ENCODE measurements at regions of chr6 and their contacts with region 1.

Region 1: DNA sequence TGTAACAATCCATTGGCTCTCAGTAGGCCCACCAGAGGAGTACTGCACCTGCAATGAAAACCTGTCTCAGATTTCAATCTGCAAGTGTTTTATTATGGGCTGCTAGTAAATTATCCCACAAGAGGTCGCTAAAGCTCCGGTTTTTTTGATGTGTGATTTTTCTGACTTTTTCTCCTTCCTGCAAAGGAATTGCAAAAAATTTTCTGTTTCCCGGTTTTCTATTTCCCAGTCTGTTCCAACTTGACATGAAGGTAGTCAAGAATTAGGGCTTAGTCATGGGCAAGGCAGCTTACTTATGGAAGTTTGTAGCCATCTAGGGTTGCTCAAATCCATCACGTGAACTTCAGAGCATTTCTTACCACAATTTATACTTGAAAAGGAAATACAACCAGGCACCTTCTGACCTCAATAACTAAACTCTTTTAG is 38.5 kb upstream of the AHI1 start:
- DNase-seq: peak; percentile 15
- H3K4me3 Mint-ChIP-seq: peak overlapping the region; percentile 55
- H3K27ac Mint-ChIP-seq: peak overlapping the region; percentile 77
- H3K4me1 Mint-ChIP-seq: peaks cover 53% of the 10 kb centered on the region
- H3K27me3 Mint-ChIP-seq: no peaks in the 10 kb centered on the region

Region 2: GRCh38 chr6:135506270-135506997 is 29.6 kb before region 1 on chr6:
- intact Hi-C with region 1: loop called (anchors 1 kb)
- DNase-seq: no peak
- H3K4me3 Mint-ChIP-seq: no peak overlapping the region
- H3K27ac Mint-ChIP-seq: no peak overlapping the region
- H3K4me1 Mint-ChIP-seq: peaks cover 11% of the 10 kb centered on the region
- H3K27me3 Mint-ChIP-seq: no peaks in the 10 kb centered on the region

Region 3: DNA sequence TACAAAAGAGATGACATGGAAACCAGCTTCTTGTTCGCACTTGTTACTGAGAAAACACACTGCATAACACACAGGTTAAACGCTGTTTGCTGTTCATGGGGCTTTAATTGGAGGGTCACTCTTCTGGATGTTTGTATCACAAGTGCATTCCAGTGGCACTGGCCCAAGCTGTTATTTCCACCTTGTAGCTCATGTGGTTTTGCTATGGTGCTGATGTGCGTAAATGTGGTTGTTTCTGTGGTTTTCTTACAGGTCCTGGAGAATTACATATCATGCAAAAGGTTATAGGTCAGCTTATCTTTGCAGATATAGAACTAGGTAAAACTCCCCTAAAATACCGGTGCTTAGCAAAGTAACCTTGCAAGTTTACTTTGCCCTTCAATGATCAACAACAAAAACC is 50.8 kb after region 1 on chr6:
- intact Hi-C with region 1: loop called (anchors 1 kb)
- DNase-seq: peak; percentile 38
- H3K4me3 Mint-ChIP-seq: peak overlapping the region; percentile 27
- H3K27ac Mint-ChIP-seq: peak overlapping the region; percentile 88
- H3K4me1 Mint-ChIP-seq: peaks cover 74% of the 10 kb centered on the region
- H3K27me3 Mint-ChIP-seq: no peaks in the 10 kb centered on the region

Region 4: DNA sequence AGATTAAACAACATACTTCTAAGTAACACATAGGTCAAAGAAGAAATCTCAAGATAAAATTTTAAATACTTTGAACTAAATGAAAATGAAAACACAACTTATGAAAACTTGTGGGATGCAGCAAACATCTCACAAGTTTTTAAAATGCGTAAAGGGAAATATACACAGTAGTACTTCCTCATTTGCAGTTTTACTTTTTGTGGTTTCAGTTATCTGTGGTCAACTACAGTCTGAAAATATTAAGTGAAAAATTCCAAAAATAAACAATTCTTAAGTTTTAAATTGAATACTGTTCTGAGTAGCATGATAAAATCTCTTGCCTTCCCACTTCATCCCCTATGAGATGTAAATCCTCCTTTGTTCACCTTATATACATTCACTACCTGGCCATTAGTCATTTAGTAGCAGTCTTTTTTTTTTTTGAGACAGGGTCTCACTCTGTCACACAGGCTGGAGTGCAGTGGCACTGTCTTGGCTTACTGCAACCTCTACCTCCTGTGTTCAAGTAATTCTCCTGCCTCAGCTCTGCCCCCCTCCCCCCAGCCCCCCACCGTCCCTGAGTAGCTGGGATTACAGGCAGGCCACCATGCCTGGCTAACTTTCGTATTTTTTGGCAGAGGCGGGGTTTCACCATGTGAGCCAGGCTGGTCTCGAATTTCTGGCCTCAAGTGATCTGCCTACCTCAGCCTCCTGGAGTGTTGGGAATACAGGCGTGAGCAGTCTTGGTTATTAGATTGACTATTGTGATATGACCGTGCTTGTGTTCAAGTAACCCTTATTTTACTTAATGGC is 116.2 kb after region 1 on chr6:
- intact Hi-C with region 1: loop called (anchors 1 kb)
- DNase-seq: no peak
- H3K4me3 Mint-ChIP-seq: peak overlapping the region; percentile 57
- H3K27ac Mint-ChIP-seq: peak overlapping the region; percentile 91
- H3K4me1 Mint-ChIP-seq: peaks cover 44% of the 10 kb centered on the region
- H3K27me3 Mint-ChIP-seq: no peaks in the 10 kb centered on the region

Region 5: DNA sequence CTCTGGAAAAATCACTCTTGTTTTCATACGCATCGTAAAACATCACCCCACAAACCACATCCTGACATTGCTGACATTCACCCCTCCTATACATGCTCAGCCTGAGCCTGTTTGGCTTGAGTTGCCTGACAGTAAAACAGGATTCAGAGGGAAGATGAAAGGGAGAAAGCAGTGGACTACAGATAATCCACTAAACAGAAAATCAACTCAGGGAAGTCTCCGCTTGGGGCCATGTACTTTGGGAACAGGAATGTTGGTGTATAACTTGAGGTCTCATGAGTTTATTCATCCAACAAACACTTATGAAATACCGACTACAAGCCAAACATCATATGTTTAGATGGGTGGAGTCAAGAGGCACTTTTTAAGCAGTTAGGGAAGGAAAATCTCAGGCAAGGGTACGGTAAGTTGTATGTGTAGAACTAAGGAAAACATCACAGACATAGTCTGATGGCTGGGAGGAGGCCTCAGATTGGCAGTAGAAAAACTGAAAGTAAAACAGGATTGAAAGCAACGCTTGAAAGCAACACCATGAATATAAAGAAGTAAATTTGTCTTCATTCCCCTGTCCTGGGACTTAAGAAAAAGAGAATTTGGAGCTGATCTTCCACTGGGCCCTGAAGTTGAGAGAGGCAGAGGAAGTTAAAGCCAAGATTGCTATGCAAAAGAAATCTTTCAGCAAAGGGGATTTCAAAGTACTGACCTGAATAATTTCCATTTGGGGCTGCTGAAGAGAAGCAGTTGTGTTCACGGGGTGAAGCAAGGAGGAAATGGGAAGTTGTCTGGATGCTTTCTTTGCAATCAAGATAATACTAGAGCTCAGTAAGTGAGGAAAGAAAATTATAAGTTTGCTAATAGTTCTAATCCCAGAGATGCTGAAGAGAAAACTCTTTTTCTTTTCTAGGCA is 344.3 kb after region 1 on chr6:
- intact Hi-C with region 1: loop called (anchors 1 kb)
- DNase-seq: peak; percentile 61
- H3K4me3 Mint-ChIP-seq: peak overlapping the region; percentile 79
- H3K27ac Mint-ChIP-seq: peak overlapping the region; percentile 97
- H3K4me1 Mint-ChIP-seq: peaks cover 46% of the 10 kb centered on the region
- H3K27me3 Mint-ChIP-seq: no peaks in the 10 kb centered on the region

Region 6: GRCh38 chr6:136317021-136317694 is 781.2 kb after region 1 on chr6:
- intact Hi-C with region 1: loop called (anchors 10 kb)
- DNase-seq: peak; percentile 41
- H3K4me3 Mint-ChIP-seq: no peak overlapping the region
- H3K27ac Mint-ChIP-seq: no peak overlapping the region
- H3K4me1 Mint-ChIP-seq: no peaks in the 10 kb centered on the region
- H3K27me3 Mint-ChIP-seq: peaks cover 9% of the 10 kb centered on the region